ENCODE measurements at regions of chr9 and their contacts with region 1.

Region 1: DNA sequence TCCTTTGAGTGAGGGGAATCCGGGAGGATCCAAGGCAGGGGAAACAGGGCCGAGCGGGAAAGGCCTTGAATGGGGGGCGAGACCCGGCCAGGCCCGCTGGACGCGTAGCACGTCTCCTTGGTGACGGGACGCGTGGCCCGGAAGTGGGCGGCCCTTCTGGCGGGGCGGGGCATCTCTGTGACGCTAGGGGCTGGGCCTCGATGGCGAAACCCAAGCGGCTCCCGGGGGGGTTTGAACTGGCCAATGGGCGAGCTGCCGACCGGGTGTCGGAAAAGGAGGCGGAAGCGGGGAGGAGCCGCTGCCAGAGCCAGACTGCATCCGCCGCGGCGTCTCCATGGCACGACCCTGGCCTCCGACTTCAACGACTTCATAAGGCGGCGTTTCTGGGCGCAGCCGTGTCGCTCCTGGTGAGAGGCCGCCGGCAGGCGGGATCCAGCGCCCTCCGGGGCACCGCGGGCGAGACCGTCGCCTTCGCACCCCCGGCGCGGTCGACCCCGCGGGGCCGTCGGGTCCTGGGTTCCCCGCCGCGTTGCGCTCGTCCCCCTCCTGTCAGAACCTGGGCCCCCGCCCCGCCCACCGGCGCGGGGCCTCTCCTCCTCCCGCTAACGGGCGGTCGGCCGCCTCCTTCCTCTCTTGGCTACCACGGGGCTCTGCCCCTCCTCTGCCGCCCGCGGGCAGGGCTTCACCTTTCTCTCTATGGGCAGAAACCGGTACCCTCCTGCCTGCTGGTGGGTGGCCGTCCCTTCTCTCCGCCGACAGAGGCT is at the start of gene ODF2:
- DNase-seq: peak; percentile 94 to 95 (median 94)
- H3K4me3 ChIP-seq: peak within 1 kb of the TSS; percentile 67 to 93 (median 70)
- H3K4me3 Mint-ChIP-seq: peak within 1 kb of the TSS; percentile 86 to 93
- H3K27ac ChIP-seq: peak within 1 kb of the TSS; percentile 54 to 85
- H3K27ac Mint-ChIP-seq: peak within 1 kb of the TSS; percentile 69 to 93 (median 88)
- H3K4me1 ChIP-seq: peaks cover 12 to 20% of the 10 kb centered on the region in 2 donors
- H3K4me1 Mint-ChIP-seq: peaks cover 15% of the 10 kb centered on the region
- H3K27me3 ChIP-seq: no peaks in the 10 kb centered on the region
- H3K27me3 Mint-ChIP-seq: peaks cover 2 to 10% (median 6%) of the 10 kb centered on the region in 3 donors
- CTCF ChIP-seq: no peak
- polyA plus RNA-seq, gene ODF2: 7.9 to 24.1 (median 11.4) TPM

Region 2: GRCh38 chr9:128322404-128323211 is 133.4 kb before region 1 on chr9 and contains the starts of genes COQ4 and TRUB2:
- intact Hi-C with region 1: loop called in 1 of 2 experiments (anchors 5 kb)
- DNase-seq: peak; percentile 90 to 92 (median 91)
- H3K4me3 ChIP-seq: peak within 1 kb of the TSS; percentile 58 to 96 (median 76)
- H3K4me3 Mint-ChIP-seq: peak within 1 kb of the TSS; percentile 90 to 95
- H3K27ac ChIP-seq: peak within 1 kb of the TSS; percentile 86
- H3K27ac Mint-ChIP-seq: peak within 1 kb of the TSS; percentile 95 to 99 (median 97)
- H3K4me1 ChIP-seq: peaks cover 20 to 23% of the 10 kb centered on the region in 2 donors
- H3K4me1 Mint-ChIP-seq: peaks cover 14% of the 10 kb centered on the region
- H3K27me3 ChIP-seq: no peaks in the 10 kb centered on the region
- H3K27me3 Mint-ChIP-seq: peaks cover 0 to 3% (median 0%) of the 10 kb centered on the region in 3 donors
- CTCF ChIP-seq: no peak
- polyA plus RNA-seq, gene COQ4: 19.9 to 32.6 (median 20.4) TPM
- polyA plus RNA-seq, gene TRUB2: 5.9 to 17.0 (median 13.5) TPM

Region 3: GRCh38 chr9:128370826-128371621 is 85.0 kb before region 1 on chr9 and contains the start of gene URM1:
- intact Hi-C with region 1: loop called in 1 of 2 experiments (anchors 5 kb)
- DNase-seq: peak; percentile 96 to 99 (median 99)
- H3K4me3 ChIP-seq: peak within 1 kb of the TSS; percentile 75 to 94 (median 93)
- H3K4me3 Mint-ChIP-seq: peak within 1 kb of the TSS; percentile 89 to 96
- H3K27ac ChIP-seq: peak within 1 kb of the TSS; percentile 83 to 99
- H3K27ac Mint-ChIP-seq: peak within 1 kb of the TSS; percentile 96 to 99 (median 98)
- H3K4me1 ChIP-seq: peaks cover 20 to 22% of the 10 kb centered on the region in 2 donors
- H3K4me1 Mint-ChIP-seq: peaks cover 30% of the 10 kb centered on the region
- H3K27me3 ChIP-seq: no peaks in the 10 kb centered on the region
- H3K27me3 Mint-ChIP-seq: peaks cover 0 to 3% (median 0%) of the 10 kb centered on the region in 3 donors
- CTCF ChIP-seq: no peak
- polyA plus RNA-seq, gene URM1: 37.5 to 39.7 (median 38.3) TPM

Region 4: GRCh38 chr9:128396970-128397613 is 58.9 kb before region 1 on chr9:
- intact Hi-C with region 1: no loop called
- DNase-seq: peak; percentile 35 to 43 (median 39)
- H3K4me3 ChIP-seq: peak overlapping the region in 1 of 3 experiments; percentile 16
- H3K4me3 Mint-ChIP-seq: peak overlapping the region; percentile 31 to 83
- H3K27ac ChIP-seq: no peak overlapping the region
- H3K27ac Mint-ChIP-seq: peak overlapping the region in 2 of 7 donors; percentile 38 to 73
- H3K4me1 ChIP-seq: peaks cover 10 to 11% of the 10 kb centered on the region in 2 donors
- H3K4me1 Mint-ChIP-seq: peaks cover 14% of the 10 kb centered on the region
- H3K27me3 ChIP-seq: no peaks in the 10 kb centered on the region
- H3K27me3 Mint-ChIP-seq: peaks cover 8 to 30% (median 13%) of the 10 kb centered on the region in 3 donors
- CTCF ChIP-seq: no peak

Region 5: GRCh38 chr9:128504485-128505413 is 48.7 kb after region 1 on chr9 and contains the start of gene GLE1:
- intact Hi-C with region 1: loop called in 1 of 2 experiments (anchors 1 kb)
- DNase-seq: peak; percentile 89
- H3K4me3 ChIP-seq: peak within 1 kb of the TSS; percentile 81 to 99 (median 94)
- H3K4me3 Mint-ChIP-seq: peak within 1 kb of the TSS; percentile 98 to 100
- H3K27ac ChIP-seq: peak within 1 kb of the TSS; percentile 66 to 93
- H3K27ac Mint-ChIP-seq: peak within 1 kb of the TSS; percentile 92 to 98 (median 97)
- H3K4me1 ChIP-seq: peaks cover 17 to 20% of the 10 kb centered on the region in 2 donors
- H3K4me1 Mint-ChIP-seq: peaks cover 16% of the 10 kb centered on the region
- H3K27me3 ChIP-seq: no peaks in the 10 kb centered on the region
- H3K27me3 Mint-ChIP-seq: peaks cover 0 to 1% (median 0%) of the 10 kb centered on the region in 3 donors
- CTCF ChIP-seq: no peak
- polyA plus RNA-seq, gene GLE1: 16.0 to 31.2 (median 22.2) TPM

Region 6: DNA sequence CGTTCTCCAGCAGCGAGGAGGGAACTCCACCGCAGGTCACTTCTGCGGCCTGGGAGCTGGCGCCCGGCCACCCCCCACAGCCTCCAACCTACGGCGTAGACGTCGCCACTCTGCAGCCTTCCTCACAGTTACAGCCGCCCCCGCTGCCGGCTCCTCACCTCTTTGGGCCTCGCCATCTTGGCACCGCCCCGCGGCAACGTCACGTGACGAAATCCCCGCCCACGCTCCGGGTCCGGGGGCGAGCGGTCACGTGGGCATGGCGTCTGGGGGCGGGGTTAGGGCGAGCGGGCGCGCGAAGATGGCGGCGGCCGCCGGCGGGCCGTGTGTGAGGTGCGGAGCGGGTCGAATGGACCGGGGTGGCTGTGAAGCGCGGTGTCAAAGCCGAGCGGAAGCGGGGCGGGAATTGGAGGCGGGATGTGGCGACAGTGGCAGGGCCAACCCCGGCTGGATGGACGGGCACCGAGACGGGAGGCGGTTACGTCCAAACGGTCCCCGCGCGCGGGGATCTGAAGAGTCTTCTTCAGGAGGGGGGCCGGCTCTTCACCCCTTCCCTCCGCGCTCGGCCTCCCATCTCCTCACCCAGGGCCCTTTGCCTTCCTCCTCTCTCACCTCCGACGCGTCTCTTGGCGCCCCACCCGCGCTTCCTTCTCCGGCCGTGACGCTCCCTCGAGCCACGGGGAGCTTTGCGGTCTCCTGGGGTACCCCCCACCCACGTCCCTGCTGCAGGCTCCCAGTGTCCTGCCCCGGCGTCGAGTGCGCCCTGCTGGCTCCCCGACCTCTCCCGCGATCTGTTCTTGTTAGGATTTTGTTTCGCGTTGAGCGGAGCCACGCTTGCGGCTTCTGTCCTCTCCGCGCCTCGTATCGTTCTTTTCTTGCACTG is 491.6 kb after region 1 on chr9 and contains the starts of genes DOLK and NUP188:
- intact Hi-C with region 1: loop called in 1 of 2 experiments (anchors 5 kb)
- DNase-seq: peak; percentile 85 to 91 (median 90)
- H3K4me3 ChIP-seq: peak within 1 kb of the TSS; percentile 89 to 99 (median 89)
- H3K4me3 Mint-ChIP-seq: peak within 1 kb of the TSS; percentile 93 to 98
- H3K27ac ChIP-seq: peak within 1 kb of the TSS; percentile 83 to 91
- H3K27ac Mint-ChIP-seq: peak within 1 kb of the TSS; percentile 93 to 98 (median 96)
- H3K4me1 ChIP-seq: peaks cover 12 to 20% of the 10 kb centered on the region in 2 donors
- H3K4me1 Mint-ChIP-seq: peaks cover 18% of the 10 kb centered on the region
- H3K27me3 ChIP-seq: no peaks in the 10 kb centered on the region
- H3K27me3 Mint-ChIP-seq: peaks cover 0 to 4% (median 2%) of the 10 kb centered on the region in 3 donors
- CTCF ChIP-seq: no peak
- polyA plus RNA-seq, gene DOLK: 0.76 to 8.5 (median 7.0) TPM
- polyA plus RNA-seq, gene NUP188: 10.5 to 28.2 (median 17.2) TPM

Region 7: DNA sequence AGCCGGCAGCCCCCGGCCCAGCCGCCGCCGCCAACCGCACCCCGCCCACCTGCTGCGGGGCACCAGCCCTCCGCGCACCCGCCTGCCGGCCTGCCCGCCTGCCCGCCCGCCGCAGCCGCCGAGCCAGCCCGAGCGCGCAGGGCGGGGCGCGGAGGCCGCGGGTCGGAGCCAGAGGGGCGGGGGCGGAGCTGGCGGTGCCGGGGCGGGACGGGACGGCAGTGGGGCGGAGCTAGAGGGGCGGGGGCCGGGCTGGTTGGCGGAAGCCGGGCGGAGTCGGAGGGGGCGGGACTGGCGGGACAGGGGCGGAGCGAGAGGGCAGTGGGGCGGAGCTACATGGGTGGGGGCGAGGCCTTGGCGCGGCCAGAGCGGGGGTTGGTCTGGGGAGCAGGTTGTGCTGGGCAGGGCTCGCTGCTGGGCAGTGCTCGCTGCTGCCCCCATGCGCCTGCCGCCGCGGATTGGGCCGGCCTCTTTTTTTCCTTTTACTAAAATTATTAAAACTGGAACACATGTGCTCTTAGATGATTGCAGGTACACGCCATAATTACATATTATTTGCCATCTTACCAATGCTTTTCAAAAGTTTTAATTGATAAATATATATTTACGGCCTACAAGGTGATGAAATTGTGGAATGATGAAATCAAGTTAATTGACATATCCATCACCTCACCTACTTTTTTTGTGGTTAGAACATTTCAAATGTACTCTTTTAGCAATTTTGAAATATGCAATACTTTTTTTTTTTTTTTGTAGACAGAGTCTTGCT is 572.3 kb after region 1 on chr9 and contains the start of gene SH3GLB2:
- intact Hi-C with region 1: loop called in 1 of 2 experiments (anchors 10 kb)
- DNase-seq: peak; percentile 92 to 97 (median 95)
- H3K4me3 ChIP-seq: peak within 1 kb of the TSS; percentile 47 to 78 (median 65)
- H3K4me3 Mint-ChIP-seq: peak within 1 kb of the TSS; percentile 71 to 85
- H3K27ac ChIP-seq: no peak within 1 kb of the TSS
- H3K27ac Mint-ChIP-seq: peak within 1 kb of the TSS in 1 of 7 donors; percentile 26
- H3K4me1 ChIP-seq: peaks cover 12 to 24% of the 10 kb centered on the region in 2 donors
- H3K4me1 Mint-ChIP-seq: peaks cover 20% of the 10 kb centered on the region
- H3K27me3 ChIP-seq: no peaks in the 10 kb centered on the region
- H3K27me3 Mint-ChIP-seq: no peaks in the 10 kb centered on the region
- CTCF ChIP-seq: peak; percentile 83
- polyA plus RNA-seq, gene SH3GLB2: 8.0 to 77.0 (median 25.9) TPM

Measured in CD14-positive monocyte (primary cell).